Colonic mucosa (tissue), 4 donors: ENCODE measurements at regions of chr7 and their contacts with region 1.

Region 1: GRCh38 chr7:31744294-31744874 is 57.4 kb downstream of the PPP1R17 start:
- DNase-seq: peak; percentile 63
- H3K4me3 ChIP-seq: no peak overlapping the region
- H3K27ac ChIP-seq: no peak overlapping the region
- H3K4me1 ChIP-seq: no peaks in the 10 kb centered on the region
- H3K27me3 ChIP-seq: no peaks in the 10 kb centered on the region
- CTCF ChIP-seq: peak; percentile 84

Region 2: GRCh38 chr7:31583942-31584341 is 160.4 kb before region 1 on chr7:
- intact Hi-C with region 1: no loop called
- DNase-seq: no peak
- H3K4me3 ChIP-seq: no peak overlapping the region
- H3K27ac ChIP-seq: no peak overlapping the region
- H3K4me1 ChIP-seq: no peaks in the 10 kb centered on the region
- H3K27me3 ChIP-seq: no peaks in the 10 kb centered on the region
- CTCF ChIP-seq: no peak

Region 3: DNA sequence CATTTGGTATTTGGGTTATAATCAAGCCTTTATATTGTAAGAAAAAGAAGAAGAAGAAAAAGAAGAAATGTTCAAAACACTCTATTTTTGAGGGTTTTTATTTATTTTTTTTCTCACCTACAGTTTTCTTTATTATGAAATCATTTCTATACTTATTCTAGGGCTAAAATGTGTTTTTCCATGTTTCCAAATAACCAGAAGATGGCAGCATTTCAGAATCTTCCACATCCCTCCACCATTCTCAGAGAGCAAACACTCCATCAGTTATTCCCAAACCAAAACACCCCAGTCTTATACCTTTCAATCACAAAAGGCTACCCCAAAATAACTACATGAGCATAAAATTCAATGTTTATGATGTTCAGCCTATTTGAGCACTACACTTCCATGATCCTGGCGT is 96.1 kb before region 1 on chr7:
- intact Hi-C with region 1: no loop called
- DNase-seq: no peak
- H3K4me3 ChIP-seq: no peak overlapping the region
- H3K27ac ChIP-seq: no peak overlapping the region
- H3K4me1 ChIP-seq: no peaks in the 10 kb centered on the region
- H3K27me3 ChIP-seq: no peaks in the 10 kb centered on the region
- CTCF ChIP-seq: no peak

Region 4: GRCh38 chr7:32164346-32164957 is 420.1 kb after region 1 on chr7:
- intact Hi-C with region 1: loop called (anchors 10 kb)
- DNase-seq: no peak
- H3K4me3 ChIP-seq: no peak overlapping the region
- H3K27ac ChIP-seq: no peak overlapping the region
- H3K4me1 ChIP-seq: no peaks in the 10 kb centered on the region
- H3K27me3 ChIP-seq: no peaks in the 10 kb centered on the region
- CTCF ChIP-seq: no peak

Region 5: DNA sequence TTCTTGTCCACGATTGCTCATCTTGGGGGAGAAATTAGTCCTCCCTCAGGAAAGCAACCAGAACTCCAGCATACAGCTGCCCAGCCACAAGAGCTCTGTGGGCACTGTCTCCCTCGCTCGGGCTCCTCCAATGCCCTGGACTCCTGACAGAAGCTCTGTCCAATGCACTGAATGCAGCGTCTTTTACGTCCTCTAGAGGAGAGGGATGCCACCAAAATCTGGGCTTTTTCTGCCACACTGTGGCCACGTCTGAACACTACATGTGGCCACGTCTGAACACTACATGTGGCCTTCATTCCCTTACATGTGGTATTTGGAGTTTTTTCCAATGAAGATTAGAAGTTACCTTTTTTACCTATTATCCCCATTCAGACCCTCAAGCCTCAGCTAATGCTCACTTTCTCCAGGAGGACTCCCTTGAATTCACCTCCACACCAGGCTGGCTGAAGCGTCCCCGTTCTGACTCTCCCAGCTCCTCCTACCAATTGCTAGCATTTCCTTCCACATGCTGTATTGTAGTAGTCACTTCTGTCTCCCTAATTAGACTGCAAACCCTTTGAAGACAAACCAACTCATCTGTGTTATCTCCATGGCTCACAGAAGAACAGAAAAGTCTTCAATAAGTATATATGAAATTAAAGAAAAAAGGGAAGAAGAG is 460.1 kb after region 1 on chr7:
- intact Hi-C with region 1: loop called (anchors 2 kb)
- DNase-seq: peak; percentile 33
- H3K4me3 ChIP-seq: peak overlapping the region; percentile 1
- H3K27ac ChIP-seq: no peak overlapping the region
- H3K4me1 ChIP-seq: no peaks in the 10 kb centered on the region
- H3K27me3 ChIP-seq: no peaks in the 10 kb centered on the region
- CTCF ChIP-seq: peak; percentile 59

Region 6: GRCh38 chr7:32347244-32347828 is 603.0 kb after region 1 on chr7:
- intact Hi-C with region 1: loop called (anchors 2 kb)
- DNase-seq: peak; percentile 30
- H3K4me3 ChIP-seq: no peak overlapping the region
- H3K27ac ChIP-seq: no peak overlapping the region
- H3K4me1 ChIP-seq: no peaks in the 10 kb centered on the region
- H3K27me3 ChIP-seq: no peaks in the 10 kb centered on the region
- CTCF ChIP-seq: peak; percentile 67

Region 7: GRCh38 chr7:32479574-32480200 is 735.3 kb after region 1 on chr7:
- intact Hi-C with region 1: loop called (anchors 10 kb)
- DNase-seq: peak; percentile 26
- H3K4me3 ChIP-seq: no peak overlapping the region
- H3K27ac ChIP-seq: no peak overlapping the region
- H3K4me1 ChIP-seq: no peaks in the 10 kb centered on the region
- H3K27me3 ChIP-seq: no peaks in the 10 kb centered on the region
- CTCF ChIP-seq: peak; percentile 81